Activated CD4-positive, alpha-beta T cell treated with anti-CD3 and anti-CD28 coated beads, Interleukin-2, amount 10 ng/mL, durations not matched to agents 24 days and 14 days (primary cell): ENCODE measurements at regions of chr19 and their contacts with region 1.

Region 1: DNA sequence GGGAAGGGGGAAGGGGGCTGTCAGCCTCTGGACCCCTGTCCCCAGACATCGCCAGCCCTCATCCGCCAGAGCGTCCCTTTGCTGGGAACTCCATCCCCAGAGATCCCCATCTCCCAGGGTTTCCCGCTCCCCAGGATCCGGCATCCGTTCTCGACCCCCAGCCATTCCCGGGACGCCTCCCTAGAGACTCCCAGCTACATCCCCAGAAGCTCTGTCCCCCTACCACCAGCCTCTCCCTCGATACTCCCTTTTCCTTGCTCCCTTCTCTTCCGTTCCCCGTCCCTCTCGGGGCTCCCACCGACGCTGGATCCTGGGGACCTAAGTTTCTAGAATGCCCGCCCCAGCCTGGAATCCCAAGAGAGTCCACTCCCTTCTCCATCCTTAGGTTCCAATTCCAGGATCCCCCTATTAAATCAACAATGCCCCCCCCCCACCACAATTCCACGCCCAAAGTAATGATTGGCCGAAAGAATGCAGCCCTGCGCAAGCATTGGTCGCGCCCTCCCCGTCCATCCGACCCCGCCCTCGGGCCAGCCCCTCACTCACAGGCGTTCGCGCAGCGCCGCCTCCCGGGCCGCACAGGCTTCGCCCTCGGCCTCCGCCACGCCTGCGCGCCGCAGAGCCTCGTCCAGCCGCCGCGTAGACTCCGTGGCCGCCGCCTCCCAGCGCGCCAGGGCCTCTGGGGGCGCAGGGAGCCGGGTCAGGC is 3.2 kb downstream of the CCDC194 start:
- DNase-seq: peak; percentile 98
- H3K4me3 Mint-ChIP-seq: peak overlapping the region; percentile 98
- H3K27ac Mint-ChIP-seq: peak overlapping the region; percentile 34
- H3K4me1 Mint-ChIP-seq: peaks cover 20% of the 10 kb centered on the region
- H3K27me3 Mint-ChIP-seq: peaks cover 16% of the 10 kb centered on the region

Region 2: GRCh38 chr19:17075035-17075863 is 315.6 kb before region 1 on chr19 and contains the starts of genes HAUS8 and MYO9B:
- intact Hi-C with region 1: loop called (anchors 10 kb)
- DNase-seq: peak; percentile 100
- H3K4me3 Mint-ChIP-seq: peak within 1 kb of the TSS; percentile 100
- H3K27ac Mint-ChIP-seq: peak within 1 kb of the TSS; percentile 99
- H3K4me1 Mint-ChIP-seq: peaks cover 51% of the 10 kb centered on the region
- H3K27me3 Mint-ChIP-seq: no peaks in the 10 kb centered on the region
- total RNA-seq, gene HAUS8: 32.5 and 35.0 TPM in 2 replicates
- total RNA-seq, gene MYO9B: 120 TPM in 2 replicates

Region 3: GRCh38 chr19:17292286-17293097 is 98.3 kb before region 1 on chr19:
- intact Hi-C with region 1: loop called (anchors 1 kb)
- DNase-seq: peak; percentile 95
- H3K4me3 Mint-ChIP-seq: peak overlapping the region; percentile 92
- H3K27ac Mint-ChIP-seq: peak overlapping the region; percentile 89
- H3K4me1 Mint-ChIP-seq: peaks cover 3% of the 10 kb centered on the region
- H3K27me3 Mint-ChIP-seq: peaks cover 7% of the 10 kb centered on the region

Region 4: DNA sequence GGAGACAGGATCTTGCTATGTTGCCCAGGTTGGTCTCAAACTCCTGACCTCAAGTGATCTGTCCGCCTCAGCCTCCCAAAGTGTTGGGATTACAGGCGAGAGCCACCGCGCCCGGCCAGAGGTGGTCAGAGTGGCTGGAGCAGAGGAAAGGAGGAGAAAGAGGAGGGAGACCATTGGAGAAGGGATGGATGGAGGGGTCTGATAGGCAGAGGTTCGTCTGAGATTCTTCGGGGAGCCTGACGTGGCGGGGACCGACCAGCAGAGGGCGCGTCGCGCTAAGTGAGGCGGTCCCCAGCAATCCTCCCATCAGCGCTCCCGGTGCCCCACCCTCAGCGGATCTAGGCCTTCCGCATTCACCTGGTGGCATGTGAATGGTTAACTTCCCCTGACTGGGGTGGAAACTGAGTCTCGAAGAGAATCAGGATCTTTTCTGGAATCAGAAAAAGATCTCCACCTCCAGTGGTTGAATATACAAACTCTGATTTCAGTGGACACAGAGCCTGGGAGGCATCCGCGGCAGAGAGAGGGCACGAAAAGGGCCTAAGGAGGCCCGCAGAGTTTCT is 44.6 kb before region 1 on chr19:
- intact Hi-C with region 1: loop called (anchors 1 kb)
- DNase-seq: peak; percentile 95
- H3K4me3 Mint-ChIP-seq: peak overlapping the region; percentile 23
- H3K27ac Mint-ChIP-seq: no peak overlapping the region
- H3K4me1 Mint-ChIP-seq: peaks cover 7% of the 10 kb centered on the region
- H3K27me3 Mint-ChIP-seq: peaks cover 4% of the 10 kb centered on the region

Region 5: GRCh38 chr19:17358395-17358794 is 32.4 kb before region 1 on chr19:
- intact Hi-C with region 1: no loop called
- DNase-seq: no peak
- H3K4me3 Mint-ChIP-seq: no peak overlapping the region
- H3K27ac Mint-ChIP-seq: no peak overlapping the region
- H3K4me1 Mint-ChIP-seq: no peaks in the 10 kb centered on the region
- H3K27me3 Mint-ChIP-seq: peaks cover 7% of the 10 kb centered on the region

Region 6: GRCh38 chr19:17405250-17406038 is 14.6 kb after region 1 on chr19 and contains the start of gene BST2:
- intact Hi-C with region 1: loop called (anchors 1 kb)
- DNase-seq: peak; percentile 88
- H3K4me3 Mint-ChIP-seq: peak within 1 kb of the TSS; percentile 97
- H3K27ac Mint-ChIP-seq: peak within 1 kb of the TSS; percentile 91
- H3K4me1 Mint-ChIP-seq: peaks cover 33% of the 10 kb centered on the region
- H3K27me3 Mint-ChIP-seq: no peaks in the 10 kb centered on the region
- total RNA-seq, gene BST2: 151 and 153 TPM in 2 replicates

Region 7: GRCh38 chr19:17419621-17420466 is 29.0 kb after region 1 on chr19 and contains the start of gene MVB12A:
- intact Hi-C with region 1: loop called (anchors 1 kb)
- DNase-seq: peak; percentile 98
- H3K4me3 Mint-ChIP-seq: peak within 1 kb of the TSS; percentile 92
- H3K27ac Mint-ChIP-seq: peak within 1 kb of the TSS; percentile 91
- H3K4me1 Mint-ChIP-seq: peaks cover 23% of the 10 kb centered on the region
- H3K27me3 Mint-ChIP-seq: no peaks in the 10 kb centered on the region
- total RNA-seq, gene MVB12A: 40.3 and 45.8 TPM in 2 replicates

Region 8: GRCh38 chr19:17470068-17470841 is 79.4 kb after region 1 on chr19 and contains the start of gene SLC27A1:
- intact Hi-C with region 1: loop called (anchors 1 kb)
- DNase-seq: peak; percentile 96
- H3K4me3 Mint-ChIP-seq: peak within 1 kb of the TSS; percentile 100
- H3K27ac Mint-ChIP-seq: peak within 1 kb of the TSS; percentile 92
- H3K4me1 Mint-ChIP-seq: peaks cover 30% of the 10 kb centered on the region
- H3K27me3 Mint-ChIP-seq: peaks cover 18% of the 10 kb centered on the region
- total RNA-seq, gene SLC27A1: 1.8 and 2.5 TPM in 2 replicates